ENCODE measurements at regions of chr12 and their contacts with region 1.

Region 1: GRCh38 chr12:55847603-55848291 is 5.0 kb upstream of the MMP19 start:
- DNase-seq: peak; percentile 95
- ATAC-seq: peak; percentile 95 to 97

Region 2: DNA sequence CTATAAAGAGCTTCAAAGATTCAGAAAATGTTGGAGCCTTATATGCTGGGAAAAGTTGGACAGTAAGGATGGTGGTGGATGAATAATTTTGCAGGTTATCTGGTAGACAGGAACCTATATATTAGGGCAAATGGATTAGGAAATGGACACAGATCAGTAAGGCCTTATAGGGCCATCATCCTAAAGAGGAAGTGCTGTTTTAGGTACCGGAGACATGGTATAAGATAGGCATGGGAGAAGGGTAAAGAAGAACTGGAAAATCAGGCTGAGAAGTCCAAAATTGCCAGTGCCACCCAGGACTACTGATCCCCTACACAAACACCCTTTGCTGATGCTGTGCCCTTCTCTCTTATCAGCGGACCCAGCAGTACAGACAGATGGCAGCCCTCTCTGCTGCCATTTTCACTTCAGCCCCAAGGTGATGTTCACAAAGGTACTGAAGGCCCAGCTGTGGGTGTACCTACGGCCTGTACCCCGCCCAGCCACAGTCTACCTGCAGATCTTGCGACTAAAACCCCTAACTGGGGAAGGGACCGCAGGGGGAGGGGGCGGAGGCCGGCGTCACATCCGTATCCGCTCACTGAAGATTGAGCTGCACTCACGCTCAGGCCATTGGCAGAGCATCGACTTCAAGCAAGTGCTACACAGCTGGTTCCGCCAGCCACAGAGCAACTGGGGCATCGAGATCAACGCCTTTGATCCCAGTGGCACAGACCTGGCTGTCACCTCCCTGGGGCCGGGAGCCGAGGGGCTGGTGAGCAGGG is 99.3 kb before region 1 on chr12:
- intact Hi-C with region 1: no loop called
- DNase-seq: no peak
- ATAC-seq: no peak

Region 3: GRCh38 chr12:55829967-55830600 is 17.7 kb before region 1 on chr12:
- intact Hi-C with region 1: loop called in 1 of 2 experiments (anchors 2 kb)
- DNase-seq: peak; percentile 66
- ATAC-seq: peak; percentile 20 to 50

Region 4: GRCh38 chr12:55885113-55885512 is 37.4 kb after region 1 on chr12:
- intact Hi-C with region 1: no loop called
- DNase-seq: no peak
- ATAC-seq: no peak

Measured in left cardiac atrium (tissue), 4 donors.